ENCODE measurements at regions of chr11 and their contacts with region 1.

Region 1: GRCh38 chr11:75625991-75626888 is 42.6 kb downstream of the MAP6 start:
- DNase-seq: no peak
- H3K4me3 ChIP-seq: no peak overlapping the region; a peak in 2 of 4 replicates
- H3K27ac ChIP-seq: peak overlapping the region; percentile 87 to 100
- H3K4me1 ChIP-seq: peaks cover 30 to 69% of the 10 kb centered on the region in 2 experiments
- H3K27me3 ChIP-seq: no peaks in the 10 kb centered on the region
- CTCF ChIP-seq: no peak
- EP300 ChIP-seq: no peak; a peak in 1 of 4 replicates
- RAD21 ChIP-seq: no peak

Region 2: GRCh38 chr11:75554258-75555022 is 71.8 kb before region 1 on chr11:
- CTCF ChIA-PET with region 1: interaction called, 3 read pairs
- POLR2A ChIA-PET with region 1: interaction called, 16 read pairs
- DNase-seq: peak; percentile 96
- H3K4me3 ChIP-seq: peak overlapping the region in 1 of 2 experiments; percentile 14; a peak in 1 of 4 replicates
- H3K27ac ChIP-seq: peak overlapping the region; percentile 58 to 98; a peak in 3 of 4 replicates
- H3K4me1 ChIP-seq: peaks cover 38 to 58% of the 10 kb centered on the region in 2 experiments
- H3K27me3 ChIP-seq: no peaks in the 10 kb centered on the region
- CTCF ChIP-seq: no peak
- EP300 ChIP-seq: peak; percentile 20 to 89; a peak in 3 of 4 replicates
- RAD21 ChIP-seq: no peak; the same call in 1 of the 2 replicates

Region 3: DNA sequence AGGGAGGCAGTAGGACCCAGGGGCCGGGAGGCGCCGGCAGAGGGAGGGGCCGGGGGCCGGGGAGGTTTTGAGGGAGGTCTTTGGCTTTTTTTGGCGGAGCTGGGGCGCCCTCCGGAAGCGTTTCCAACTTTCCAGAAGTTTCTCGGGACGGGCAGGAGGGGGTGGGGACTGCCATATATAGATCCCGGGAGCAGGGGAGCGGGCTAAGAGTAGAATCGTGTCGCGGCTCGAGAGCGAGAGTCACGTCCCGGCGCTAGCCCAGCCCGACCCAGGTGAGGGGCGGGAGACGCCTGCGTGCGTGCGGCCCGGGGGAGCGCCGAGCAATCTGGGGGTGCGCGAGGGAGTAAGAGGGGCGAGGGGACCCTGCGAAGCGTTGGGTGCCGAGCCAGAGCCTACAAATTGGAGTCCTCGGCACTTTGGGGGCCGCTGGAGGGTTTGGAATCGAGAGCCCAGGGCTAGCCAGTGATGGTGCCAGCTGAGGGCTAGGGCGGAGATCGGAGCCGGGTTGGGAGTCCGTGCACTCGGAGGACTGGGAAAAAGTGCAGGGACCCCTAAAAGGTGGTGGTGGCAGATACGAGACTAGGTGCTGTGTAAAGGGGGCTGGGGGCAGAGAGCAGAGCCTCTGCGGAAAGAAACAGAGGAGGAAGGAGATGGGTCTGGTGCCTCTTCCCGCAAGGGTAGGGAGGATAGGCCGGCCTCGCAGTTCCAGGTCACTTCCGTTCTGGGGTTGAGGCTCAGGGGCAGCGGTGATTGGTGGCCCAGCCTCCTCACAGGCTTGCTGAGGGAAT is 64.0 kb before region 1 on chr11 and contains the start of gene SERPINH1:
- CTCF ChIA-PET with region 1: no interaction called
- POLR2A ChIA-PET with region 1: interaction called, 10 read pairs
- DNase-seq: peak; percentile 95
- H3K4me3 ChIP-seq: peak within 1 kb of the TSS; percentile 77 to 89
- H3K27ac ChIP-seq: peak within 1 kb of the TSS; percentile 92 to 98
- H3K4me1 ChIP-seq: peaks cover 46 to 60% of the 10 kb centered on the region in 2 experiments
- H3K27me3 ChIP-seq: no peaks in the 10 kb centered on the region
- CTCF ChIP-seq: no peak
- EP300 ChIP-seq: peak; percentile 43 to 87; a peak in 3 of 4 replicates
- RAD21 ChIP-seq: no peak
- polyA plus RNA-seq, gene SERPINH1: 221 and 293 TPM in 2 replicates

Region 4: GRCh38 chr11:75582895-75583717 is 43.1 kb before region 1 on chr11:
- CTCF ChIA-PET with region 1: interaction called, 14 read pairs
- POLR2A ChIA-PET with region 1: interaction called, 13 read pairs
- DNase-seq: peak; percentile 93
- H3K4me3 ChIP-seq: peak overlapping the region; percentile 51 to 59
- H3K27ac ChIP-seq: peak overlapping the region; percentile 56 to 93
- H3K4me1 ChIP-seq: peaks cover 15 to 20% of the 10 kb centered on the region in 2 experiments; a peak in 2 of 4 replicates
- H3K27me3 ChIP-seq: no peaks in the 10 kb centered on the region
- CTCF ChIP-seq: peak; percentile 50
- EP300 ChIP-seq: no peak
- RAD21 ChIP-seq: no peak; the same call in 1 of the 2 replicates

Region 5: GRCh38 chr11:75639762-75640181 is 13.5 kb after region 1 on chr11:
- CTCF ChIA-PET with region 1: interaction called, 23 read pairs
- POLR2A ChIA-PET with region 1: interaction called, 20 read pairs
- DNase-seq: peak; percentile 75
- H3K4me3 ChIP-seq: peak overlapping the region; percentile 8 to 19; a peak in 2 of 4 replicates
- H3K27ac ChIP-seq: peak overlapping the region; percentile 51 to 98; a peak in 3 of 4 replicates
- H3K4me1 ChIP-seq: peaks cover 22 to 65% of the 10 kb centered on the region in 2 experiments; a peak in 3 of 4 replicates
- H3K27me3 ChIP-seq: no peaks in the 10 kb centered on the region
- CTCF ChIP-seq: no peak
- EP300 ChIP-seq: peak in 1 of 2 experiments; percentile 84; a peak in 1 of 4 replicates
- RAD21 ChIP-seq: peak; percentile 30